Ovary (tissue), 10 donors: ENCODE measurements at regions of chr15 and their contacts with region 1.

Region 1: GRCh38 chr15:57675481-57676181 is 30.9 kb upstream of the POLR2M start:
- DNase-seq: no peak
- H3K4me3 ChIP-seq: no peak overlapping the region
- H3K27ac ChIP-seq: no peak overlapping the region
- H3K4me1 ChIP-seq: no peaks in the 10 kb centered on the region
- H3K27me3 ChIP-seq: no peaks in the 10 kb centered on the region
- CTCF ChIP-seq: no peak
- EP300 ChIP-seq: no peak
- POLR2A ChIP-seq: no peak

Region 2: GRCh38 chr15:56869573-56869972 is 806.1 kb before region 1 on chr15:
- intact Hi-C with region 1: no loop called
- DNase-seq: peak in 1 of 5 donors; percentile 49
- H3K4me3 ChIP-seq: no peak overlapping the region
- H3K27ac ChIP-seq: no peak overlapping the region
- H3K4me1 ChIP-seq: peaks cover 3% of the 10 kb centered on the region
- H3K27me3 ChIP-seq: no peaks in the 10 kb centered on the region
- CTCF ChIP-seq: peak in 2 of 3 donors; percentile 18 to 26
- EP300 ChIP-seq: no peak
- POLR2A ChIP-seq: no peak

Region 3: DNA sequence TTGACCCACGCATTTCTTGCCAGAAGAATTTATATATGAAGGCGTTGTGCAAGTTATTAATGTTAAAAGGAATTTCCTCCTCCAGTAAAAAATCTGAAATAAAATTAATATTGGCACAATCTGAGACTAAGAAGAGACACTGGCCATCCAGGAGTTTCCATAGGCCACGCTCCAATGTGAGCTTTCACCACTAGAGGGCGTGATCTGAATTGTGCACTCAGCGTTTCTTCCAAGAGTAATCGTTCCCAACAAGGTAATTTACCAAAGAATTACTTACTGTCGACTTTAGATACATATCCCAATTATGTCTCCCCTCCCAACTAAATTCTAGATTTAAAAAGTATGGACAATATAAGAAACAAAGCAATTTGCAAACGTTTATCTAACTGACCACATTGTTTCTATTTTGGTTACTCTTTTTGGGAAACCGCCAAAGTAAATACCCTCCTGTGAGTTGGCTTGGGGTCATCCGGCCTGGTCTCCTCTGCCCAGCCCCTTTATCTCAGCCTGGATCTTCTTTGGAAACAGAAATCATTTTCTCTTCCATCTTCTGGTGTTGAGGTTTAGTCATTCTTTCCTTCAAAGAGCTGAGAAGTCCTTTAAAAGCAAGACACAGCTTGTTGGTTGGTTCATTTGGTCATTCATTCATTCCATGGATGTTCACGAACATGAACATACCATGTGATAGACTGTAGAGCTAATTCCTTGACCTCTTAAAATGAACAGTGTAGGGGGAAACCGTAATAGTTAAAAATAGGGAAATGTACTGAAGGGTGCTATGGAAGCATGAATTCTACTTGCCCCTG is 57.1 kb after region 1 on chr15:
- intact Hi-C with region 1: loop called in 1 of 4 experiments (anchors 10 kb)
- DNase-seq: peak; percentile 21 to 46 (median 39)
- H3K4me3 ChIP-seq: no peak overlapping the region
- H3K27ac ChIP-seq: no peak overlapping the region
- H3K4me1 ChIP-seq: peaks cover 1% of the 10 kb centered on the region
- H3K27me3 ChIP-seq: no peaks in the 10 kb centered on the region
- CTCF ChIP-seq: peak; percentile 23 to 45 (median 38)
- EP300 ChIP-seq: no peak
- POLR2A ChIP-seq: no peak

Region 4: DNA sequence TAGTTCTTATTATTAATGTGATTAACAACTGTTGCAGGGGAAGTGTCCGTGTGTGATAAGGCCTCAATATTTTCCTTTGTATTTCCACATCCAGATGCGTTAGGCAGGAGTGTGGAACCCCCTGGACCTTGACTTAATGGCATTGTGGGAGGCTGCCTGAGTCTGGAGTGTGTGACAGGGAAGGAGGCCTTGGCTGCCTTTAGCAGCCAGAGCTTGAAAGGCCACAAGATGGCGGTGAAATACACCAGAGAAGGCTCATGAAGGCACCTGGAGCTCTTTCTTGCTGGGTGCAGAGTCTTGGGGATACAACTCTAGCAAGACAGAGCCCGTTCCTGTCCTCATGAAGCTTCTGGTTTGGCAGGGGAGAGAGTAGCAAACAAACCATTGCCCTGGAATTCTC is 67.8 kb after region 1 on chr15:
- intact Hi-C with region 1: loop called in 2 of 4 experiments (anchors 5 to 10 kb)
- DNase-seq: no peak
- H3K4me3 ChIP-seq: no peak overlapping the region
- H3K27ac ChIP-seq: no peak overlapping the region
- H3K4me1 ChIP-seq: no peaks in the 10 kb centered on the region
- H3K27me3 ChIP-seq: no peaks in the 10 kb centered on the region
- CTCF ChIP-seq: no peak
- EP300 ChIP-seq: no peak
- POLR2A ChIP-seq: no peak